Right ventricle myocardium inferior (tissue), 1 donor: ENCODE measurements at regions of chr7 and their contacts with region 1.

Region 1: DNA sequence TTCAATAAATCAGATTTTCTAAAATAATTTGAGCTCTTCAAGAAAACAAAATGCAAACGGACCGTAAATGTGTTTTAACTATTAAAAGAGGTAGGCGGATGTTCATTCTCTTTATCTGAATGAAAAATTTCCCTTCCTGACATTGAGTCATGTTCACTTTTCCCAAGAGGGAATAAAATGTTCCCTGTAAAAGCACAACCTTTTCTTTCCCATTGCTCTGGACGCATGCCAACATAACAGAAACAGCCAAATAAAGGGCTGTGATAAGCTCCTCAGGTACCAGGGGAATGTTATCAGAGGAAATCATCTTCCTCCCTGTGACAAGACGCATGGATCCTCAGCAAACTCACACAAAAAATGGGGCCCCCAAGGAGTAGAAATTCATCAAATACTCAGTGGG is 251.8 kb downstream of the MTERF1 start:
- DNase-seq: no peak
- ATAC-seq: no peak

Region 2: GRCh38 chr7:91264046-91264923 is 364.5 kb before region 1 on chr7 and contains the start of gene FZD1:
- intact Hi-C with region 1: loop called (anchors 10 kb)
- DNase-seq: peak; percentile 97
- ATAC-seq: peak; percentile 98
- total RNA-seq, gene FZD1: 10.3 TPM

Region 3: GRCh38 chr7:91898246-91898992 is 269.7 kb after region 1 on chr7:
- intact Hi-C with region 1: no loop called
- DNase-seq: no peak
- ATAC-seq: no peak